Activated CD8-positive, alpha-beta T cell treated with anti-CD3 and anti-CD28 coated beads for 36 hours (primary cell): ENCODE measurements at regions of chr16 and their contacts with region 1.

Region 1: DNA sequence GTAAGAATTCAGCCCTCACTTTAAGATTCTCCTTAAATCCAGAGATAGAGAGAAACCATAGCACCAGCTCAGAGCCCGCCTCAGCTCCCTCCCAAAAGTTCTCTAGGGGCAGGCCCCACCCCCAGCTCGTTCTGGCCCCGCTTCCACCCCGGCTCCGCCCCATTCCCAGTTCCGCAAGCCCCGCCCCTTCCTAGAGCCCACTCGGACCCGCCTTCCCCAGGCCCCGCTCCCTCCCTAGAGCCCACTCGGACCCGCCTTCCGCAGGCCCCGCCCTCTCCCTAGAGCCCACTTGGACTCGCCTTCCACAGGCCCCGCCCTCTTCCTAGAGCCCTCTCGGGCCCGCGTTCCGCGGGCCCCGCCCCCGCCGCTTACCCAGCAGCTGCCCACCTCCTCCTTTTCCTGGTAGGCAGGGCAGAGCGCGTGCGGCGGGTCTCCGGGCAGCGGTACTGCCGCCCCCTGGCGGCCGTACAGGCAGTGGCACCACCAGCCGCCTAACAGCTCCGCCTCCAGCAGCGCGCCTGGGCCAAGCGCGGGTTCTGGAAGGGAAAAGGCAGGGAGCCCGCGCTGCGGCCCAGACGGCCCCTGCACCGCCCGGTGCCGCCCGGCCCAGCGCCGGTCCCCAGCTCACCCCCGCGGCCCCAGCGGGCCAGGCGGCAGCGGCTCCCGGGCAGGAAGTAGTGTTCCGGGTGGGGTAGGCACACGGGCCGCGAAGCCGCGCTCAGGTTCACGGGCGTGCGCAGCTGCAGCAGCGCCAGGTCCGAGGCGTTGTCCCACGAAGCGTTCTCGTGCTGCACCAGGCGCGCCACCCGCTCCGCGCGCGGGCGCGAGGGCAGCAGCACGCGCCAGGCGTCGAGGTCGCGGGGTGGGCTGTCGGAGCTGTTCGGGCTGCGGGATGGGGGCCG is 6.8 kb upstream of the PRSS8 start:
- DNase-seq: peak; percentile 99
- ATAC-seq: peak; percentile 99
- H3K4me3 Mint-ChIP-seq: peak overlapping the region; percentile 67
- H3K27ac Mint-ChIP-seq: peak overlapping the region; percentile 87
- H3K4me1 Mint-ChIP-seq: peaks cover 7% of the 10 kb centered on the region
- H3K27me3 Mint-ChIP-seq: no peaks in the 10 kb centered on the region
- CTCF ChIP-seq: peak; percentile 72

Region 2: DNA sequence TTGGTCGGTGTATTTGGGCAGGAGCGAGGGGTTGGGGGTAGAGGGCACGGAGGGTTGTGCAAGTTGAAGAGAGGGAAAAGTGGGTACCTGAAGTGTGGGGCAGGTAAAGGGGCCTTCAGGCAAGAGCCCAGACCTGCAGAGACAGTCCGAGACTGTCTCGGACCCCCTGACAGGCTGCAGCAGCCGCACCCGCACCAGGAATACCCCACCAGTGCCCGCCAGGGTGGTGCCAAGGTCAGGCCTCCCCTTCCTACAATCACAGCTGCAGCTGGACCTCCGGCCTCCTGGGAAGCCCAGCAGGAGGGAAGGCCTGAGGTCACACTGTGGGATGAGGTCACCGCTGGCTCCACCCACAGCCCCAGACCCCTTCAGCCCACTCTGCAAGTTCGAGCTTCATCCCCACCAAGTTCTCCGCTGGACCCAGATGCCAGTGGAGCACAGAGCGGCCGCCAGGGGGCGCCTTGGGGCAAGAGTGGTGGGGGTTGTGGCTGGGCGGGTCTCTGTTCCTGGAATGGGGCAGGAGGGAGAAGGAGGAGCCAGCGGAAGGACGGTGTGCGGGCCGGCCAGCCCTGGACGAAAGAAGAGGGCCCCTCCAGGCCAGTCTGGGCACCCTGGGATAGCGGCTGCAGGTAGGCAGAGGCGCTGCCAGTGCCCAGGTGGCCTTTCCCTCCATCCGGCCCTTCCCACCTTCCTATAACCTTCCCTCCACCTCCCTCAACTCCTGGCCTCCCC is 157.5 kb before region 1 on chr16 and contains the start of gene HSD3B7:
- CTCF ChIA-PET with region 1: interaction called, 23 read pairs
- POLR2A ChIA-PET with region 1: no interaction called
- intact Hi-C with region 1: no loop called
- DNase-seq: peak; percentile 85
- ATAC-seq: peak; percentile 80
- H3K4me3 Mint-ChIP-seq: no peak within 1 kb of the TSS
- H3K27ac Mint-ChIP-seq: no peak within 1 kb of the TSS
- H3K4me1 Mint-ChIP-seq: no peaks in the 10 kb centered on the region
- H3K27me3 Mint-ChIP-seq: no peaks in the 10 kb centered on the region
- CTCF ChIP-seq: peak; percentile 95
- total RNA-seq, gene HSD3B7: 0.45 to 1.3 TPM

Region 3: DNA sequence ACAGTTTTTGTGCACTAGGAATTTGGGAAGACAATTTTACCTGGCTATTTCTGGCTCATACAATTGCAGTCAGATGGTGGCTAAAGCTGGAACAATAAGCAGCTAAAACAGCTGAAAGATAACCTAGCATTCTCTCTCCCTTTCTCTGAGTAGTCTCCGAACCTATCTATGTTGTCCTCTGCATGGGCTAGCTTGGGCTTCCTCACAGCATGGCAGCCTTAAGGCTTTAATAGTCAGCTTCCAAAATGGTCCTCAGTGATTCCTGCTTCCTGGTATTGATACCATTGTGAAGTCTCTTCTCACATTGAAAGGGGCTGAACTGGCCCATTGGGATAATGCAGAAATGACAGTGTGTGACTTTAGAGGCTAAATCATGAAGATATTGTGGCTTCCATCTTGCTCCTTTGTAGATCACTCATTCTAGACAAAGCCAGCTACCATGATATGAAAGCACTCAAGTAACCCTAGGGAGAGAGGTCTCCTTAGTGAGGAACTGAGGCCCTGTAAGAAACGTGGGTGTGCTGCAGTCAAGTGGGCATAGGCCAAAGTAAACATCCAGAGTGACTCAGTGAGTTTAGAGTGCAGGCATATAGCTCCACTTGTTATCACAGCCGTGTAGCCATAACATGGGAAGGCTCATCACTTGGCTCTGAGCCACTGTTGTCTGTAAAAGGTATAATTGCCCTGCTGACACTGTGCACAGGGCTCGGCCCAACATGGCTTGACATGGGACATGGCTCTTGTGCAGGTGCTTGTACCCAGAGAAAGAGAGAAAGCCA is 42.3 kb before region 1 on chr16:
- CTCF ChIA-PET with region 1: interaction called, 11 read pairs
- POLR2A ChIA-PET with region 1: interaction called, 3 read pairs
- intact Hi-C with region 1: no loop called
- DNase-seq: no peak
- ATAC-seq: no peak
- H3K4me3 Mint-ChIP-seq: no peak overlapping the region
- H3K27ac Mint-ChIP-seq: no peak overlapping the region
- H3K4me1 Mint-ChIP-seq: peaks cover 8% of the 10 kb centered on the region
- H3K27me3 Mint-ChIP-seq: no peaks in the 10 kb centered on the region
- CTCF ChIP-seq: no peak

Region 4: GRCh38 chr16:31128711-31129567 is 13.4 kb before region 1 on chr16:
- CTCF ChIA-PET with region 1: interaction called, 12 read pairs
- POLR2A ChIA-PET with region 1: interaction called, 6 read pairs
- intact Hi-C with region 1: no loop called
- DNase-seq: no peak
- ATAC-seq: no peak
- H3K4me3 Mint-ChIP-seq: no peak overlapping the region
- H3K27ac Mint-ChIP-seq: no peak overlapping the region
- H3K4me1 Mint-ChIP-seq: peaks cover 2% of the 10 kb centered on the region
- H3K27me3 Mint-ChIP-seq: no peaks in the 10 kb centered on the region
- CTCF ChIP-seq: no peak

Region 5: GRCh38 chr16:31243734-31244670 is 101.6 kb after region 1 on chr16:
- CTCF ChIA-PET with region 1: no interaction called
- POLR2A ChIA-PET with region 1: no interaction called
- intact Hi-C with region 1: no loop called
- DNase-seq: no peak
- ATAC-seq: no peak
- H3K4me3 Mint-ChIP-seq: no peak overlapping the region
- H3K27ac Mint-ChIP-seq: no peak overlapping the region
- H3K4me1 Mint-ChIP-seq: no peaks in the 10 kb centered on the region
- H3K27me3 Mint-ChIP-seq: no peaks in the 10 kb centered on the region
- CTCF ChIP-seq: no peak